ENCODE measurements at regions of chr7 and their contacts with region 1.

Region 1: DNA sequence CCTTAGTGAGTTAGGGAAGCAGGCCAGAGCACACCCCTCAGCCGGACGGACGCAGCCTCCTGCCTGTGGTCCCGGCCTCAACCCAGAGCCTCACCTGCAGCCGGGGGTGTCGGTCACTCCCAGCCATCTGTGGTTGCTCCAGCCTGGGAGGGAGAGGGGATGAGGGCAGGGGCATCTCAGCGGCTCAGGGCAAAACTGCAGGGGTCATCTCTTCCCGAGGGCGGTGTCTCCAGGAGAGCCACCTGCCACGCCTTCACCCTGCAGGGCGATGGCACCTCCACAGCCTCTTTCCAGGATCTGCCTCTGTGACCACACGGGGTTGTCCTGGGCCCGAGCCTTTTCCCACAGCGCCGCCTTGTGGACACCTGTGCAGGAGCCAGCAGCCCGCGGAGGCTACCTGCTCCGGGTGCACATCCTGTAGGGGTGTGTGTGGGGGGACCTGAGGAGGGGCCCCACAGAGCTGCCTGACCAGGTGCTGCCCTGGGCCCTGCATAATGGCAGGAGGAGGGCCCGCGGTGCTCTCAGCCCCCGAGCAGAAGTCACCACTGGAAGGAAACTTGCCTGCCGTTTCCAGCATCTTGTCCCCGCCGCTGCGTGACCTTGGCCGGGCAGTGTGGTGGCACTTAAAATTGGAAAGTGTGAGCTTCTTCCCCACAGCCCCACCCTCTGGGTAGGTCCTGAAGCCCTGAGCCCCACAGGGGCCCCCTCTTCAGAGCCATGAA is 21.6 kb upstream of the AP5Z1 start:
- DNase-seq: no peak
- H3K4me3 ChIP-seq: no peak overlapping the region
- H3K27ac ChIP-seq: peak overlapping the region; percentile 28 to 70 (median 46)
- H3K4me1 ChIP-seq: peaks cover 17 to 39% (median 31%) of the 10 kb centered on the region in 4 donors
- H3K27me3 ChIP-seq: no peaks in the 10 kb centered on the region
- CTCF ChIP-seq: peak; percentile 87 to 94 (median 93)
- EP300 ChIP-seq: no peak
- POLR2A ChIP-seq: no peak

Region 2: DNA sequence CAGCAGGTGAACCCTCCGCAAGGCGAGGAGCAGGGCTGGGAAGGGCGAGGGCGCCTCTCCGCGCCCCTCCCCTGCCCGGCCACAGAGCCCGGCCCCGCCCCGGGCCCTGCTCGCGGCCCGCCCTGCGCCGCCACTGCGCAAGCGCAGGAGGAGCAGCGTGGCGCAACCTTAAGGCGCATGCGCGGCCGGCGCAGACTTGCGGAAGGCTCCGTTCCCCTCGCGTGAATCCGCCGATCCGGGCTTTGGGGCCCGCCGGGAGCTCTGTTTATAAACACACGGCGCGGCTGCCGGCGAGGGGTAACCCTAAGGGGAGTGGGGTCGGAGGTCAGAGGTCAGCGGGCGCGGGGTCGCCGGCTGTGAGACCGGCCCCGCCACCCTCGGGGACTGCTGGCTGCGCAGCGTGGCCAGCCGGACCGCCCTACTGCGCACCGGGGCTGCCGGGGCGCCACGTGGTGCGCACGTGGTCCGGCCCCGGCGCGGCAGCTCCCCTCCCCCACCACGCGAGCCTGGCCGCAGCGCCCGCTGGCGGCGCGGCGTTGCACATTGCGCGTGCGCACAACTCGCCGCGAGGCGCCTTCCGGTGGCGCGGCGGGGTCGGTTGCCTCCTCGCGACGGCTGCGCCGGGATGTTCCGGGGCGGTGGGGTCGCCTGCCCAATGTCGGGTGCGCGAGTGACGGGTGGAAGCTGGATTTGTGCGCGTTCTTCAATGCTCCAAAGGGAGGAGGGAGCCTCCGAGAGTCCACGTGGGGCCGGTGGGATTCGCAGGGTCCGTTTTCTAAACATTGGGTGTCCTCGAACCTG is 112.0 kb before region 1 on chr7:
- intact Hi-C with region 1: loop called (anchors 5 kb)
- DNase-seq: peak; percentile 98
- H3K4me3 ChIP-seq: peak overlapping the region; percentile 62 to 73 (median 69)
- H3K27ac ChIP-seq: peak overlapping the region; percentile 84 to 95 (median 88)
- H3K4me1 ChIP-seq: peaks cover 4 to 16% (median 15%) of the 10 kb centered on the region in 4 donors
- H3K27me3 ChIP-seq: peaks cover 0 to 5% (median 0%) of the 10 kb centered on the region in 4 donors
- CTCF ChIP-seq: peak; percentile 59 to 65 (median 61)
- EP300 ChIP-seq: no peak
- POLR2A ChIP-seq: peak; percentile 70